ENCODE measurements at regions of chr13 and their contacts with region 1.

Region 1: DNA sequence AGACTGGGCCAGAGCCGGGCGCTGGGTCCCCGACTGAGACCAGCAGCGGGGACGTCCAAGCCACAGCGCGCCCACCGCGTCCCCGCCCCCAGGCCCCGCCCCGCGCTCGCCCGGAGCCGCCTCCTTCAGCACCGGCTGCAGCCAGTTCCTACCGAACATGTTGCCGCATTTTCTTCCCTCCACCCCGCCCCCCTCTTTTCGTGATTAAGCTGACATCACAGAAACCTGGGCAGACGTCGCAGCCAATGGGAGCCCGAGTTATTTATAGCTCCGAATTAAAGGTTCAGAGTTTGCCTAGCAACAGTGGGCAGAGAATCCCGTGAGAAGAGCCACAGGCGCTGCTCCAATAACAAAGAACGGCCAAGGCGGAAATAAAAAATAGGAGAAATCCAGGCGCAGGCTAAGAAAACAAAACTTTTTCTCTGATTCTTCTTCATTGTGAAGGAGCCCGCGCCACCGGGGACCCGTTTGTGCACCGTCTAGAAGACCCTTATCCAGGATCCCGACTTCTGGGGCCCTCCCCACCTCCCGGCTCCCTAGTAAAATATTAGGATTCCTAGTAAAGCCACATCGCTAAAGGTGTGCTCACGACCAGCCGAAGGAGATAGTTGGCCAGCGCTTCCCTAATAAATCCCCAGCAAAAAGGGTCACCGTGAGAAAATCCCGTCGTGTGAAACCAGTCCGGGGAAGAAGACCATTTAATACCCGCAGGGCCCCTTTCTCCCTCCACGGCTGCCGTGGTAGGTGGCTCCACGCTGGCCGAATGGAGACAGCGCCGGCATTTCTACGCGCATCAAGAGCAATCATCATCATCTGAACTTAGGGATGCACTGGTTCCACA is 61.7 kb downstream of the SERP2 start:
- DNase-seq: peak; percentile 98
- H3K4me3 ChIP-seq: peak overlapping the region; percentile 51 to 65 (median 58)
- H3K27ac ChIP-seq: peak overlapping the region; percentile 87 to 92 (median 90)
- H3K4me1 ChIP-seq: peaks cover 3 to 43% (median 34%) of the 10 kb centered on the region in 4 donors
- H3K27me3 ChIP-seq: no peaks in the 10 kb centered on the region
- CTCF ChIP-seq: no peak
- EP300 ChIP-seq: no peak
- POLR2A ChIP-seq: peak; percentile 84

Region 2: GRCh38 chr13:44050450-44051063 is 384.8 kb before region 1 on chr13:
- in situ Hi-C with region 1: loop called (anchors 5 to 10 kb)
- intact Hi-C with region 1: loop called (anchors 1 kb)
- DNase-seq: no peak
- H3K4me3 ChIP-seq: no peak overlapping the region
- H3K27ac ChIP-seq: peak overlapping the region in 3 of 4 donors; percentile 38 to 62 (median 59)
- H3K4me1 ChIP-seq: peaks cover 4 to 24% (median 14%) of the 10 kb centered on the region in 4 donors
- H3K27me3 ChIP-seq: no peaks in the 10 kb centered on the region
- CTCF ChIP-seq: peak; percentile 78 to 92 (median 82)
- EP300 ChIP-seq: no peak
- POLR2A ChIP-seq: no peak

Region 3: GRCh38 chr13:44155422-44156293 is 279.7 kb before region 1 on chr13:
- in situ Hi-C with region 1: loop called in 1 of 4 experiments (anchors 10 kb)
- intact Hi-C with region 1: no loop called
- DNase-seq: peak; percentile 73
- H3K4me3 ChIP-seq: peak overlapping the region in 2 of 4 donors; percentile 7 to 35
- H3K27ac ChIP-seq: peak overlapping the region; percentile 63 to 85 (median 68)
- H3K4me1 ChIP-seq: peaks cover 9 to 31% (median 13%) of the 10 kb centered on the region in 4 donors
- H3K27me3 ChIP-seq: no peaks in the 10 kb centered on the region
- CTCF ChIP-seq: no peak
- EP300 ChIP-seq: no peak
- POLR2A ChIP-seq: no peak

Region 4: DNA sequence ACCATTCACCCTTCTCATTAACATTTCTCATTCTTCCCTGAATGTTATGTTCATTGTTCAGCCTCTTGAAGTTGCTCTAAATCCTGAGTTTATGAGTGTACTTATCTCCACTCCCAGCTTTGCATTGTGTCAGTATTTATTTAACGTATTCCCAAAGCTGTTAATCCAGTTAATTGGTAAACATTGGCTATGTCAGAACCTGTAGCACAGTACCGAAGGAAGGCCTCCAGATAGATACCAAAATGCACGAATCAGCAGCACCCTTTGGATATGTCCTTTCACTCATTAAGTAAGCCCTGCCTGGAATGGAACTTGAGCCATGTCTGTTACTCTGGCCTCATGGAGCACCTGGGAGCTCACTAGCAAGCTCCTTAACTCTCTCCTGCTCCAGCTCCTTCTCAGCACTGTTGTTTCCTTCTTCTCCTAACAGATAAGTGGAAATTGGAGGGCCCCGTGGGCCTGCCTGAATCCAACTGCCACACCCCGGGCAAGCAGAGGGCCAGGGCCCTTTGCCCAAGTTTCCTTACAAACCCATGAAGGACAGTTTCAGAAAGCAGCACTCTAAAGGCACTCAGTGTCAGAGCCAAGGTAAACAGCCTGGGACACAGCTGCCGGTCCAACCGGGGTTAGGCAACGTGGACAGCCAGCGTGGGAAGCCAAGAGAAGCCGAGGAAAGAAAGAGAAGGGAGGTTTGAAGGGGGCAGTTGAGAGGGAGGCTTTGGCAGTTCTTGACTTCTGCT is 216.7 kb before region 1 on chr13:
- in situ Hi-C with region 1: no loop called
- intact Hi-C with region 1: loop called (anchors 10 kb)
- DNase-seq: peak; percentile 60
- H3K4me3 ChIP-seq: no peak overlapping the region
- H3K27ac ChIP-seq: peak overlapping the region; percentile 47 to 87 (median 68)
- H3K4me1 ChIP-seq: peaks cover 18 to 52% (median 19%) of the 10 kb centered on the region in 4 donors
- H3K27me3 ChIP-seq: no peaks in the 10 kb centered on the region
- CTCF ChIP-seq: no peak
- EP300 ChIP-seq: no peak
- POLR2A ChIP-seq: no peak

Region 5: DNA sequence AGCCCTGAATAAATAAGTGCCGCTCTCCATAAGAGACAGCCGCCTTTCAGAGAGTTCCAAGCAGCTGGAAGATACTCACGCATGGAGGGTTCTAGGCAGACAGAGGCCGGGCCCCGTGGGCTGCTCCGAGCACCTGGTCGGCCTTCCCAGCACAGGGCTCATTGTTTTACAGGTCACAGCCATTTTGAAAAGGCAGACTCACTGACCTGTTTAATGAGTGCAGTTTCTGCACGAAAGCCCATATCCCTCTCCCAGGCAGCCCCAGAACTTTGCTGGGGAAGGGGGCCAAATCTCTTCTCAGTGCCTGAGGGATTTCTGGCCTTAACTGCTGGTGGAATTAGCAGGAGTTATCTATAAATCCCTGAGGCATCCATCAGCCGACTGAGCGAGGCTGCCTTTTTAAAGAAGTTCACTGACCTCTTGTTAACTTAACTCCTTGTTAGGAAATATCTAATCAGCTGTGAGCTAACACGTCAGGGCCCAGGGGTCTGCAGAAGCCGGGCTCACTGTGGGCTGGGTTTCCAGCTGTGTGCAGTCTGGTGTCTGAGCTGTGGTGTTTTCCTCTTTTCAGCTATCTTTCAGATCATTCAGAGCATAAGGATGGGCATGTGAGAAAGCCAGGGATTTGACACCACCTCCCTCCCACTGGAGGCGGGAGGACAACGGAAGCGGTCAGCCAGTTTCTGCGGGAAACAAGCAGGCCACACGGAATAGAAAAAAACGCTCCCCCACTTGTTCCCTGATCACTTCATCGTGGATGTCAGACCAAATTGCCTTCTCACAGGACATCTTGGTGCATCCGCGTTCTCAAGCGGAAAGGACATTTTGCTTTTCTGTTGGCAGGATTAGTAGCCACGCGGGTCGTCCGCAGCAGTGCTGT is 38.4 kb before region 1 on chr13:
- in situ Hi-C with region 1: no loop called
- intact Hi-C with region 1: no loop called
- DNase-seq: no peak
- H3K4me3 ChIP-seq: no peak overlapping the region
- H3K27ac ChIP-seq: peak overlapping the region; percentile 42 to 57 (median 56)
- H3K4me1 ChIP-seq: peaks cover 0 to 13% (median 0%) of the 10 kb centered on the region in 4 donors
- H3K27me3 ChIP-seq: no peaks in the 10 kb centered on the region
- CTCF ChIP-seq: no peak
- EP300 ChIP-seq: no peak
- POLR2A ChIP-seq: no peak